Breast epithelium (tissue), 4 donors: ENCODE measurements at regions of chr2 and their contacts with region 1.

Region 1: GRCh38 chr2:59322868-59323267 is 1081.7 kb upstream of the FANCL start:
- DNase-seq: no peak
- H3K4me3 ChIP-seq: no peak overlapping the region
- H3K27ac ChIP-seq: no peak overlapping the region
- H3K4me1 ChIP-seq: no peaks in the 10 kb centered on the region
- H3K27me3 ChIP-seq: no peaks in the 10 kb centered on the region
- CTCF ChIP-seq: no peak
- POLR2A ChIP-seq: no peak

Region 2: GRCh38 chr2:59302683-59303082 is 20.2 kb before region 1 on chr2:
- intact Hi-C with region 1: loop called (anchors 1 kb)
- DNase-seq: no peak
- H3K4me3 ChIP-seq: no peak overlapping the region
- H3K27ac ChIP-seq: no peak overlapping the region
- H3K4me1 ChIP-seq: no peaks in the 10 kb centered on the region
- H3K27me3 ChIP-seq: no peaks in the 10 kb centered on the region
- CTCF ChIP-seq: no peak
- POLR2A ChIP-seq: no peak